ENCODE measurements at regions of chr5 and their contacts with region 1.

Region 1: GRCh38 chr5:134833340-134834032 is 12.3 kb upstream of the C5orf24 start:
- DNase-seq: peak; percentile 51
- H3K4me3 ChIP-seq: no peak overlapping the region
- CTCF ChIP-seq: no peak

Region 2: GRCh38 chr5:134798468-134798867 is 35.0 kb before region 1 on chr5:
- CTCF ChIA-PET with region 1: no interaction called
- POLR2A ChIA-PET with region 1: no interaction called
- DNase-seq: no peak
- H3K4me3 ChIP-seq: no peak overlapping the region
- CTCF ChIP-seq: no peak

Region 3: DNA sequence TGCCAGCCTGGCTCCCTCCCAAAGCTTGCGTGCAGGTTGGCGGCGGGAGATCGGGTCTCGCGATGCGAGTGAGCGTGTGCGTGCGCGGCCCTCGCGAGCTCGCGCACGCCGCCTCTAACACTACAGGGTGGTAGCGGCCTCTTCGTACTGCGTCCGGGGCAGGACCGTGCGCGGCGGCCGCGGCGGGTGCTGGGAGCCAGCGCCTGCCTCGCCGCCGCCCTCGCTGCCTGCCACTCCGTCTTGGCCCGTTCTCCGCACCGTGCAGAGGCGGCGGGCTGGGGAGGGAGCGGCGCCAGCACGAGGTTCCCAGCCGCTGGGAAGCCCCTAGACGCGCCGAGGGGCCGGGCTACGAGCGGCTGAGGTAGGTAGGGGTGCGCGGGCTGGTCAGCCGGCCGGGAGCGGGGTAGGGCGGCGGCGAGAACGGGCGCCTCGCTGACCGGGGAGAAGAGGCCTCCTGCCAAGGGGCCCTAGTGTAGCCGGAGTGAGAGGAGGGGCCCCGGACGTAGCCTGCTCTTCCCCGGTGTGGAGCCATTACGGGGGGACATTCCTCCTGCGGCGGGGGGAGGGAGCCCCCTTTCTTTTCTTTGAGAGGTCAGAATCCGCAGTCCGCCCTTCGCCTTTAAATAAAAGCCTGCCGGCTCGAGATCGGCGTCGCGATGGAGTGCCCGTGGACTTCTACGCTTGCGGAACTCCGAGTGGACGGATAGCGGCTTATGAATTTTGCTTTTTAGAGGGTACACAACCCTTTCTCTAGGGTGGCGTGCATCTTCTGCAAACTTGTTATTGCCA is 12.6 kb after region 1 on chr5 and contains the start of gene C5orf24:
- CTCF ChIA-PET with region 1: interaction called, 5 read pairs
- POLR2A ChIA-PET with region 1: interaction called, 14 read pairs
- DNase-seq: peak; percentile 75
- H3K4me3 ChIP-seq: peak within 1 kb of the TSS; percentile 78
- CTCF ChIP-seq: no peak